ENCODE measurements at regions of chr10 and their contacts with region 1.

Region 1: GRCh38 chr10:116521404-116522290 is 24.1 kb upstream of the PNLIP start:
- DNase-seq: peak; percentile 42
- CTCF ChIP-seq: peak; percentile 72

Region 2: GRCh38 chr10:116511365-116511764 is 10.3 kb before region 1 on chr10:
- CTCF ChIA-PET with region 1: interaction called, 12 read pairs
- POLR2A ChIA-PET with region 1: no interaction called
- DNase-seq: no peak
- CTCF ChIP-seq: no peak